ENCODE measurements at regions of chr16 and their contacts with region 1.

Region 1: DNA sequence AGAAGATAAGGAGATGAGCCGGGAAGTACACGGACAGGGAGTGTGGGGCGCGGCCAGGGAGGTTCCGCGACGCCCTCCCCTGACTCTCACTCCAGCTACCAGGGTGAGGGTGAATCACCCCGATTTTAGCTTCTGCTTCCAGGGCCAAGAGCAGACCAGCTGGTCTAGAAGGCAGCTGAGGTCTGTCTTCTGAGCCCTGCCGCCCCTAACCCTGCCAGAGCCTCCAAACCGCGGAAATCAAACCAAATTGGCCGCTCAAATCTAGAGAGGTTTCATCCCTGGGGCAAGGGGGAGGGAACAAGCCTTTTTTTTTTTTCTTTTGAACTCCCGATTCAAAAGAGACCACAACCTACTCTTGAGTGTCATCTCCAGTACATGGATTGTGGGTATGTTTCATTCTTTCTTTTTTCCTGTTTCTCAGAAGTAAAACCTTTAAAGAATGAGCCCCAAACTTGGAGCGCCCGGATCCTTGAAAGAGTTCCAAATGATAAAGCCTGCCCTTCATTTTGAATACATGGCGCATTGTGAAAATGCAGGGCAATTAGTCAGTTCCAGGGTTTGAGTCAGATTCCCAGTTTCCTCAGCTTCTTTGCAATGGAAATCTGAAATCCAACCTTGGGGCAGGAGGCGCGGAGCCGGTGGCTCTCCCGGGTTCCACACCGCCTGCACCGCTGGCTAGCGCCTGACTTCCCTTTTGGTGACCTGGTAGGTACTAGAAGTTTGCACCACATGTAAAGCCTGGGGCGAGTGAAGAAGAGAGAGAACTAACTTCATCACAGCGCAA is 16.5 kb upstream of the ZFHX3 start:
- DNase-seq: peak in 1 of 2 experiments; percentile 50
- H3K4me3 ChIP-seq: peak overlapping the region in 1 of 4 experiments; percentile 9; a peak in 2 of 8 replicates
- H3K27ac ChIP-seq: no peak overlapping the region
- H3K4me1 ChIP-seq: peaks cover 18 to 50% (median 25%) of the 10 kb centered on the region in 4 experiments
- H3K27me3 ChIP-seq: peaks cover 70 to 100% (median 91%) of the 10 kb centered on the region in 4 experiments
- CTCF ChIP-seq: no peak
- EP300 ChIP-seq: no peak
- POLR2A ChIP-seq: no peak
- RAD21 ChIP-seq: no peak

Region 2: DNA sequence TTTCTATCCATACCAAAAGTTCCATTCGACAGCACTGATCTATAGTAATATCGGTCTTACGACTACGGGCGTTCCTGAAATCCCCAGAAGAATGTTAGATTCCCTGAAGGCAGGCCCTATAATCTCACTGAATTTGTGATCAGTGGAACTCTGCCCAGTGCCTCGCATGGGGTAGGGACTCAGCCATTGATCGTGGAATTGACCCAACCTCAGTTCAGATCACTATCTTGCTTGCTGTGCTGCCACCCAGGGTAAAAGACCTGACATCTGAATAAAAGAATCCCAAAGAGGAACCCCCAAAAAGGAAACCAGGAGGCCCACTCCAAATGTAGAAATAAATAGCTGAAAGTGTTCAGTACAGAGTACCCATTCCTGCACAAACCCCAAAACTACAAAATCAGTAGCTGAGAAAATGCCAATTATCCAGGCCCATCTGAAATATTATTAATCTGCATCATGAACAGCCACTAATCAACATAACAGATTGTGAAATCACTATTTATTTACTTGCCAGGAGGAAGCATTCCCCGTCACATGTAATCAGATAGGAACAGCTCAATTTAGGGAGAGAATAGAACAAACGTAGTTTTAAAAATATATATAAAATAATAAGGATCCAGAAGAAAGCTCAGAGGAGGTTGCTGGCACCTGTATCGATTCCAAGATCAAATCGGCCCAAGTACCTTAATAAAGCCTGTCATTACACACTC is 238.3 kb before region 1 on chr16:
- CTCF ChIA-PET with region 1: no interaction called
- POLR2A ChIA-PET with region 1: no interaction called
- DNase-seq: no peak
- H3K4me3 ChIP-seq: no peak overlapping the region
- H3K27ac ChIP-seq: no peak overlapping the region
- H3K4me1 ChIP-seq: no peaks in the 10 kb centered on the region
- H3K27me3 ChIP-seq: no peaks in the 10 kb centered on the region
- CTCF ChIP-seq: no peak
- EP300 ChIP-seq: no peak
- POLR2A ChIP-seq: no peak
- RAD21 ChIP-seq: no peak

Region 3: DNA sequence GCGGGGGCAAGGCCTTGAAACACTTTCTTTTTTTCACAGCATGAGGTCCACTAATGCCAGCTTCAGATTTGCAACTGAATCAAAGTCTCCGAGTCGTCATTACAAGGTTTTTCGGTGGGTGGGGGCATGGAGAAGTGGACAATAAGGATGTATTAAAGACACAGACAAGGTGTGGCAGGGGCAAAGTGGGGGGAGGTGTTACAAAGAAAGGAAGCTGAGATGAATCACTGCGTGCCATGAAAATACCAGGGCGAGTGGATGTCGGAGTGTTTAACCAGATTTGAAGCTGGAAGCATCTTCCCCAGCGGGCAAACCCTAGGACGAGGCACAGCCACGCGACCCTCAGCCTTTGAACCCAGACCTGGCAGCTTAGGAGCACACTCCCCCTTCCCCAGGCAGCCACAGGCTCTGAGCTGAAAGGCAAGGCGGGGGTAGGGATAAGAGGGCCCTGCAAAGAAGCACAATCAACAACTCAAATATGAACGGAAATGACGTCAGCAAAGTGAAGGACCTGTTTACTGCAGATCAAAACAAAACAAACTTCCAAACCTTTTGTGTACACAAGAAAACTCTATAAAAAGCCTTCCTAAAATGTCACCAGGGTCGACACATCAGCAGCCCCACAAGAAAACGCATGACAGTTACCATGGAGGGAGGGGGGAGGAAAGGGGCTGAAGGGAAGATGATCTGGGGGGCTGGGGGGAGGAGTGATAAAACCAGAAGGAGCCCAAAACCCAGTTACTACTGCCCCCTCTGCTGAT is 10.9 kb before region 1 on chr16:
- CTCF ChIA-PET with region 1: interaction called, 12 read pairs
- POLR2A ChIA-PET with region 1: interaction called, 14 read pairs
- DNase-seq: no peak
- H3K4me3 ChIP-seq: peak overlapping the region; percentile 7 to 51 (median 13); a peak in 6 of 8 replicates
- H3K27ac ChIP-seq: no peak overlapping the region
- H3K4me1 ChIP-seq: peaks cover 18 to 38% (median 26%) of the 10 kb centered on the region in 4 experiments
- H3K27me3 ChIP-seq: peaks cover 50 to 88% (median 80%) of the 10 kb centered on the region in 4 experiments
- CTCF ChIP-seq: no peak
- EP300 ChIP-seq: no peak
- POLR2A ChIP-seq: no peak
- RAD21 ChIP-seq: no peak

Region 4: DNA sequence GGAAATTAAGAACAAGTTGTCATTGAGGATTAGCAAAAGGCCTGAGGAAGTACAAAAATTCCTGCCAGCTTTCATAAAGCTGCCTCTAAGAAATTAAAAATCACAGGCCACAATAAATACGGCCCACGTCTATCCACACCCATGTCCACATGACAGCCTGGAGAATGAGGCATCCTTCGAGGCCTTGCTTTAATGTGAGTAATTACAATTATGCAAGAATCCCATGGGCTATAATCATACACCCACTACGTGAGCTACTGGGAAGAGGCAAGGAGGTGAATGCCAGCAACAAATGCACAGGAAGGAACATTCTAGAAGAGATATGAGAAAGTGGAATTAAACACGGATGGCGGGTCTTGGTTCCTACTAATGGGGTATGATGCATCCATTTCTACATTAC is 48.9 kb after region 1 on chr16:
- CTCF ChIA-PET with region 1: no interaction called
- POLR2A ChIA-PET with region 1: no interaction called
- DNase-seq: no peak
- H3K4me3 ChIP-seq: no peak overlapping the region
- H3K27ac ChIP-seq: no peak overlapping the region
- H3K4me1 ChIP-seq: 0 out of 7 replicates have a peak, but pooled peaks cover 0 to 2% (median 0%) of the 10 kb centered on the region in 4 experiments
- H3K27me3 ChIP-seq: no peaks in the 10 kb centered on the region
- CTCF ChIP-seq: no peak
- EP300 ChIP-seq: no peak
- POLR2A ChIP-seq: no peak
- RAD21 ChIP-seq: no peak